ENCODE measurements at regions of chr1 and their contacts with region 1.

Region 1: DNA sequence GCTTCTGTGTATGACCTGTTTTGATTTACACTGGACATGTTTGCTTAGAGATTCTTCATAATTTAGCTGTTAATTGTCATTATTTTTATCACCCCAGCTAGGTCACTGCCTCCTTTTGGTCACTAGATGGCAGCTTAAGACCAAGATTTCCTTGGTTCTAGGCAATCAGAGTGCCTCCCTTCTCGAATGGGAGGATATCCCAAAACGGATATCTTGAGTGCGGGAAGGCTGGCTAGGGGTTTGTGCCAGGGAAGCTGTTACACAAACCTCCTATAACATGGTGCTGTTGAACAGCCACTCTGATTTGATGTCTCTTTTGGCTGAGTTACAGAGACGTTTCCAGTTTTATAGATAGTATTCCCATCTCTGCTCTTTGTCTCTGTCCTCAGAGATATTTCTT is 283.5 kb downstream of the S1PR1 start:
- DNase-seq: peak; percentile 14 to 23
- H3K4me3 ChIP-seq: no peak overlapping the region
- H3K4me3 Mint-ChIP-seq: no peak overlapping the region
- H3K27ac Mint-ChIP-seq: no peak overlapping the region
- H3K4me1 ChIP-seq: no peaks in the 10 kb centered on the region
- H3K4me1 Mint-ChIP-seq: no peaks in the 10 kb centered on the region
- H3K27me3 ChIP-seq: no peaks in the 10 kb centered on the region
- H3K27me3 Mint-ChIP-seq: no peaks in the 10 kb centered on the region
- CTCF ChIP-seq: peak; percentile 59 to 61

Region 2: DNA sequence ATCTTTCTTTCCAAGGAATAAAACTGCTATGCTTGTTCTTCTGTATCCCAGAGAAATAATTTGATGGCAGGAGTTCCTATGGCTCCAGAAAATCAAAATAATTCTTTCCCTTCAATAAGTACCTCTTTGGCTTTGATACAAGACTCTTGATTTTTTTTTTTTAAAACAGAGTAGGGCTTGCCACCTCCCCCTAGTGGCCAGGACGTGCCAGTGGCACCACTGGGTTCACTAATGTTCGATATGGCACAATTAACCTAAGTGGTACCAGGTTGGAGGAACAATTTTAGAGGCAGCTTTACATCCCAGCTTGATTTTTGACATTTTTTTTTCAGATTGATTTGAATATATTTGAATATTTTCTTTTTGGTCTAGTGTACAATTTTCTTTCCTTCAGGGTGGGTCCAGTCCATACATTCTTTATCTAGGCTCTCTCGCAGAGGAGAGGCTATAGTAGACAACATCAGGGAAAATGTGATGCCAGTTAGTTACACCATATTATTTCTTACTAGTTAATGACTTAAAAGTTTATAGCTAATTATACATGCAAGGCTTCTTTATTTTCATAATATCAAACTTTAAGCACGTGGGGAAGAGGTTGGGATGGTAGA is 47.4 kb after region 1 on chr1:
- CTCF ChIA-PET with region 1: no interaction called
- POLR2A ChIA-PET with region 1: no interaction called
- intact Hi-C with region 1: loop called (anchors 1 kb)
- DNase-seq: peak; percentile 31 to 37
- H3K4me3 ChIP-seq: no peak overlapping the region
- H3K4me3 Mint-ChIP-seq: no peak overlapping the region
- H3K27ac Mint-ChIP-seq: no peak overlapping the region
- H3K4me1 ChIP-seq: no peaks in the 10 kb centered on the region
- H3K4me1 Mint-ChIP-seq: no peaks in the 10 kb centered on the region
- H3K27me3 ChIP-seq: no peaks in the 10 kb centered on the region
- H3K27me3 Mint-ChIP-seq: no peaks in the 10 kb centered on the region
- CTCF ChIP-seq: peak; percentile 65